Posterior vena cava (tissue), 2 donors: ENCODE measurements at regions of chr20 and their contacts with region 1.

Region 1: DNA sequence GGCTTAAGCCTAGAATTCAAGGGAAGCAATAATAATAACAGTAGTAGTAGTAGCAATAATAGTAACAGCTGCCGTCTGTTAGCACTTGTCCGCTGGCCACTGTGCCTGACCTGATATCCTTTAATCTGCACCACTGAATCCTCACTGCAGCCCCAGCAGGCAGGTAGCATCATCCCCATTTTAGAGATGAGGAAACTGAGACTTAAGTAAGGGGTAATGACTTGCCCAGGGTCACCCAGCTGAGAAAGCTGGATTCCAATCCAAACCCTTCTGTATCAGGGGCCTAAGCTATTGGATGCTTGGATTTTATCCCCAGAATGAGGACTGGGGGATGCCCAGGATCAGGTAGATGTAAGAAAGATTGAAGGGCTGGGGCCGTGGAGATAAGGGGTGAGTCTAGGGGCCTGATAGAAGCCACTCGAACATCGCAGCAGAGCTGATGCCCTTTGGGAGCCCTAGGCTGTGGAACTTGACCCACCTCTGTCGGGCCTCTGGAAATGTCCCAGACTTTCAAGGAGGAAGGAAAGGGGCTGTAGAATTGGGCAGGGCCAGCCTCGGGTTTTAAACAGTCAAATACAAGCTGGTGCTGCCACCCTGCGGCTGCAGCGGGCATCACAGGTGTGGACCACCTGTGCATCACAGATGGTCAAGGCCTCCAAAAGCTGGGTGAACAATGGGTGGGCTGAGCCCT is 102.1 kb upstream of the MYL9 start:
- DNase-seq: peak; percentile 89

Region 2: GRCh38 chr20:36214684-36215256 is 224.4 kb before region 1 on chr20:
- intact Hi-C with region 1: loop called in 1 of 2 experiments (anchors 5 kb)
- DNase-seq: no peak

Region 3: GRCh38 chr20:36872852-36873251 is 433.7 kb after region 1 on chr20:
- intact Hi-C with region 1: no loop called
- DNase-seq: peak; percentile 70